Transverse colon (tissue), 4 donors: ENCODE measurements at regions of chr2 and their contacts with region 1.

Region 1: DNA sequence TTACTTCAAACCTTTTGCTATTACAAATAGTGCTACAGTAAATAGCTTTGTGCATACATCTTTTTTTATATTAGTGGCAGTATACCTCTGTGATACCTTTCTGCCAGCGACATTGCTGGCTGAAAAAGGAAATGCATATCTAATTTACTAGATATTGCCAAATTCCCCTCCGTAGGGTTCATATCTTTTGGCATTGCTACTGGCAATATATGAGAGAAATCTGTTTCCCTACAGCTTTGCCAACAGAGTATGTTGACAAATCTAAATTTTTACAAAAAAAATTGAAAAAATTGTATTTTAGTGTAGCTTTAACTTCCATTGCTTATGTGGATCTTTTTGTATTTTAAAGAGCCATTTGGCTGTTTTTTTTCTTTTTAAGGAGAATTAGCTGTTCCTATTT is 426.7 kb downstream of the TRIB2 start:
- DNase-seq: no peak
- H3K4me3 ChIP-seq: no peak overlapping the region
- H3K27ac ChIP-seq: no peak overlapping the region
- H3K4me1 ChIP-seq: no peaks in the 10 kb centered on the region
- H3K27me3 ChIP-seq: no peaks in the 10 kb centered on the region
- CTCF ChIP-seq: no peak
- EP300 ChIP-seq: no peak
- POLR2A ChIP-seq: no peak

Region 2: DNA sequence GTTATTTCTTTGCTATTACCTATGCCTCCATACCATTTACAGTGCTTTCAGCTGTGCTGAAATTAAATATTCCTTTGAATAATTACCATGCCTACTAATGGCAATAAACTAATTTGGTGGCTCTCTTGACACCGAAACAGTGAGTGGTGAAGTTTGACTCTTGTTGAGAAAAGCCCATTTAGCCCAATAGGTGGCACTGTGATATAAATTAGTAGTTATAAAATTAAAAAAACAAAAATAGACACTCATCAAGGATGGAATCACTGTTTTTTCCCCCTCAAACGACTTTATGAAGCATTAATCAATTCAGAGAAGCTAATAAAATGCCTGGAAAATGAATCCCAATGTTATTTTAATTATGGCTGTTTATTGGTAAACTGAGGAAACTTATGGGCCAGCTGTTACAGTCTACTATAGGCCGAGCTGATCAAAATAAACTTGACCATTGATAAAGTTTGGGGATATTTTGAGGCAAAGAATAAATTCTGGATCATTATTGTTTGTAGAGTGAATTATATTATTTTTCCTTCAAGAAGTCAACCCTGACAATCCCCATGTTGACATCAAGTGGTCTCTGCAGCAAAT is 87.1 kb before region 1 on chr2:
- in situ Hi-C with region 1: loop called in 1 of 4 experiments (anchors 5 kb)
- intact Hi-C with region 1: no loop called
- DNase-seq: no peak
- H3K4me3 ChIP-seq: no peak overlapping the region
- H3K27ac ChIP-seq: no peak overlapping the region
- H3K4me1 ChIP-seq: no peaks in the 10 kb centered on the region
- H3K27me3 ChIP-seq: no peaks in the 10 kb centered on the region
- CTCF ChIP-seq: peak in 2 of 5 experiments; percentile 13 to 18
- EP300 ChIP-seq: no peak
- POLR2A ChIP-seq: no peak

Region 3: DNA sequence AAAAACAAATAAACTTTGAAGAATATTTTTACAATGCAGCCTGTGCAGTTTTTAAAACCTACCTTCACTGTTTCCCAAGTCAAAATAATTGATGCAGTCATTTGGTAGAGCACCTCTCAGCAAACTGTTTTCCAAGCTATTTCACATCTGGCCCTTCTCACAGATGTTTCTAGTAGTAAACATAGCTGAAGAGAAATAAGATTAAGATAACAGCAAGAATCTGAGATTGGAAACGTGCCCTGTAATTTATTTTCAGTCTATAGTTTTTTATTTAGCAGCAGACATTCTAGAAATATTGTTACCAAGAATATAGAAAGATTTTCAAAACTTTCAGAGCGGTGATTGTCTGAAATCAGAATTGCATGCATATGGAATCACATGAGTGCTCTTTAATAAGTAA is 13.5 kb after region 1 on chr2:
- in situ Hi-C with region 1: no loop called
- intact Hi-C with region 1: no loop called
- DNase-seq: no peak
- H3K4me3 ChIP-seq: no peak overlapping the region
- H3K27ac ChIP-seq: no peak overlapping the region
- H3K4me1 ChIP-seq: no peaks in the 10 kb centered on the region
- H3K27me3 ChIP-seq: no peaks in the 10 kb centered on the region
- CTCF ChIP-seq: no peak
- EP300 ChIP-seq: no peak
- POLR2A ChIP-seq: no peak